Breast epithelium (tissue), 4 donors: ENCODE measurements at regions of chr4 and their contacts with region 1.

Region 1: DNA sequence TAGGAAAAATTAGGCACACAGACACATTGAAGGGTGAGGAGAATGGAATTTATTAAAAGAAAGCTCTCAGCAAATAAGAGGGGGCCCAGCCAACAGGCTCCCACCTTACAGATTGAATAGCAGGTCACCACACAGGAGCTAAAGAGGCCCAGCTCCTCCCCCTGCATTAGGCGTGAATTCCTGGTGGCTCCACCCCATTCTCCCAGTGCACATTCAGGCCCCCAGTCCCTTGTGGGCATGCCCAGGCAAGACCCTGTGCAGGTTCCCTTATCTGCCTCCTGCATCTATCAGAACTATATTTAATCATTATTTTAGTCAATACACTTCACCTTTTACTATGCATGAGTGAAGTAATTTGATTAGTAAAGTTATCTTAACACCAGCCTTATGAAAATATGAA is 856.3 kb upstream of the NDST4 start:
- DNase-seq: no peak
- H3K4me3 ChIP-seq: no peak overlapping the region
- H3K27ac ChIP-seq: no peak overlapping the region
- H3K4me1 ChIP-seq: no peaks in the 10 kb centered on the region
- H3K27me3 ChIP-seq: no peaks in the 10 kb centered on the region
- CTCF ChIP-seq: no peak
- POLR2A ChIP-seq: no peak

Region 2: DNA sequence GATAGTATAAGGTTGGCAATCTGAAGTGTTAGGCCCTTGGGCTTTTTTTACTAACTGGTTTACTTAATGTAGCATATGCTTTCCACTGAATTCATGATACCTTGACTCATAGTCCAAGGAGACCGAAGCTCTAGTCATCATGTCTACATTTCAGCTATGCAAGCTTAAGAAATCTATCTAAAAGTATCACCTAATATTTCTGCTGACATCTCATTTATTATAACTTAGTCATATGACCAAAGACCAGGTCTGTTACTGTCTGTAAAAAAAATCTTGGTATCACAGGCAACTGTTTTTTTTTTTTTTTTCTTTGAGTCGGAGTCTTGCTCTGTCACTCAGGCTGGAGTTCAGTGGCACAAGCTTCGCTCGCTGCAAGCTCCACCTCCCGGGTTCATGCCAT is 42.4 kb before region 1 on chr4:
- intact Hi-C with region 1: no loop called
- DNase-seq: no peak
- H3K4me3 ChIP-seq: no peak overlapping the region
- H3K27ac ChIP-seq: no peak overlapping the region
- H3K4me1 ChIP-seq: no peaks in the 10 kb centered on the region
- H3K27me3 ChIP-seq: no peaks in the 10 kb centered on the region
- CTCF ChIP-seq: no peak
- POLR2A ChIP-seq: no peak

Region 3: DNA sequence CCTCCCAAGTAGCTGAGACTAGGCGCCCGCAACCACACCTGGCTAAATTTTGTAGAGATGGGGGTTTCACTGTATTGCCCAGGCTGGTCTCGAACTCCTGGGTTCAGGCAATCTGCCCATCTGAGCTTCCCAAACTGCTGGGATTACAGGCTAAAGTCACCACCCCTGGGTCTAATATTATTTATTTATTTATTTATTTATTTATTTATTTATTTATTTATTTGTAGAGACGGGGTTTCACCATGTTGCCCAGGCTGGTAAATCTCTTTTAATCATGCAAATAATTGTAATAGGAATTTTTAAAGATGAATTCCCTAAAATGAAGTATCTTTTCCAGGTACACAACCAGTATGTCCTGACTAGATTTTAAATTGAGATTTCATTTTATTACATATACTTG is 353.9 kb after region 1 on chr4:
- intact Hi-C with region 1: no loop called
- DNase-seq: no peak
- H3K4me3 ChIP-seq: no peak overlapping the region
- H3K27ac ChIP-seq: no peak overlapping the region
- H3K4me1 ChIP-seq: no peaks in the 10 kb centered on the region
- H3K27me3 ChIP-seq: no peaks in the 10 kb centered on the region
- CTCF ChIP-seq: no peak
- POLR2A ChIP-seq: no peak

Region 4: DNA sequence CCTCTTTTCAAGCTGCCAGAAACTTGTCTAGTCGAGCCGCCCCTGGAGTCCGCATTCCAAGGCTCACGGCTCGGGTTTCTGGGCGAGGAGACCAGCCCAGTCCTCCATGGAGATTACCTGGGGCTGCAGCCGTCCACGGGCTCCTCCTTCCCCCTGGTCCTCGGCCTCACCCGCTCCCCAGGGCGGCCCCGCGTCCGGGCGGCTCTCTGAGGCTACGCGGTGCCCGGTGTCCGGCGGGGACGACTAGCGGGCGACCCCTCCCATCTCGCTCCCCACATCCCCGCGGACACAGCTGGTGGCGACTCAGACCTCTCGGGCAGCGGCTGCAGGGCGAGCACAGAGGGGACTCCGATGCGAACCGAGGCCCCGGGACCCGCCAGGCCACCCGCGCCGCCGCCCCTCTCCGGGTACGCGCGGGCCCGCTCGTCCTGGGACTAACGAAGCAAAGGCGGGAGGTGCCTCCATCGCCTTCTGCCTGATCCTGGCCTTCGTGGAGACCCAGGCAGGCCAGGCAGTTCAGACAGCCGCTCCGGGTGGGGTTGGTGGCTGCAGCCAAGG is 956.2 kb after region 1 on chr4:
- intact Hi-C with region 1: loop called (anchors 10 kb)
- DNase-seq: peak in 1 of 2 donors; percentile 49
- H3K4me3 ChIP-seq: peak overlapping the region in 2 of 3 donors; percentile 33 to 56
- H3K27ac ChIP-seq: no peak overlapping the region
- H3K4me1 ChIP-seq: no peaks in the 10 kb centered on the region
- H3K27me3 ChIP-seq: peaks cover 0 to 27% of the 10 kb centered on the region in 2 donors
- CTCF ChIP-seq: no peak
- POLR2A ChIP-seq: no peak